Activated CD4-positive, alpha-beta T cell treated with anti-CD3 and anti-CD28 coated beads, Interleukin-2, amount 10 ng/mL, durations not matched to agents 24 days and 14 days (primary cell): ENCODE measurements at regions of chr3 and their contacts with region 1.

Region 1: GRCh38 chr3:123258811-123259420 is 57.2 kb downstream of the SEC22A start:
- DNase-seq: no peak
- H3K4me3 Mint-ChIP-seq: no peak overlapping the region
- H3K27ac Mint-ChIP-seq: no peak overlapping the region
- H3K4me1 Mint-ChIP-seq: peaks cover 7% of the 10 kb centered on the region
- H3K27me3 Mint-ChIP-seq: no peaks in the 10 kb centered on the region

Region 2: DNA sequence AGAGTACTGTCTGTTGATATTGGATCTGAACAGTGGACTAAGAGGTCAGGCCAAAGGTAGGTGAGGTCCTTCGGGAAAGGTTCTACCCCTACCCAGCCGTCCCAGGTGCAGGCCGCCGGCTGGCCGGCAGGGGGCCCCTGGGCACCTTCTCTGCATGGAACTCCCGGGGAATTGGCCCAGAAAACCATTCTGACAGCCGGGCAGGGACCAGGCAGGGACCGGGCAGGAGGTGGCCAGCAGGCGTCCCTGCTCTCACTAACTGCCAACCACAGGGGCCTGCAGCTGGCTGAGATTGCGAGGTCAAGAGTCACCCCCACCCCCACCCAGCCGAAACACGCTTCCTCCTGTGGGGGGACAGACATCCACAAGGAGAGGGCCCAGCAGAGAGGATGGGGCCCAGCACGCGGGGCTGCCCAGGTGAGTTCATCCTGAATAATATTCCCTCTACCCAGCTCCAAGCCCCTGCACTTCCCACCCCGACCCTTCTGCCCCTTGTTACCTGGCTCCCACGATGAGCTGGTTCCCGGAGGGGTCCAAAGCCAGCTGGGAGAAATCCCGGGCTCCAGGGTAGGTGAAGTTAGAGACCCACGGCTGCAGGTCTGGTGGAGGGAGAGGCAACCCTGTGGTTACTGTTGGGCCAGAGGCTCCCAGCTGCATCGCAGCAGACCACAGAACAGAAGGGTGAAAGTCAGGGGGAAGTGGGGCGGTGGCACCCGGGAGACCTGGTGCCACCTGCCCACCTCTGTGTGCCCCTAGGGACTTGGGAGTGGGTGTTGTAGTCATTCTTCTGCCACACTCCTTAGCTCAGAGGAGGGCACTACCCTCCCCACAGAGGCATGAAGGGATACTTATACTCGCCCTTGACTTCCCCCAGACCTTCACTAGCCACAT is 315.7 kb before region 1 on chr3:
- intact Hi-C with region 1: loop called (anchors 2 kb)
- DNase-seq: peak; percentile 81
- H3K4me3 Mint-ChIP-seq: no peak overlapping the region
- H3K27ac Mint-ChIP-seq: no peak overlapping the region
- H3K4me1 Mint-ChIP-seq: no peaks in the 10 kb centered on the region
- H3K27me3 Mint-ChIP-seq: peaks cover 13% of the 10 kb centered on the region